Left colon (tissue), 2 donors: ENCODE measurements at regions of chr14 and their contacts with region 1.

Region 1: DNA sequence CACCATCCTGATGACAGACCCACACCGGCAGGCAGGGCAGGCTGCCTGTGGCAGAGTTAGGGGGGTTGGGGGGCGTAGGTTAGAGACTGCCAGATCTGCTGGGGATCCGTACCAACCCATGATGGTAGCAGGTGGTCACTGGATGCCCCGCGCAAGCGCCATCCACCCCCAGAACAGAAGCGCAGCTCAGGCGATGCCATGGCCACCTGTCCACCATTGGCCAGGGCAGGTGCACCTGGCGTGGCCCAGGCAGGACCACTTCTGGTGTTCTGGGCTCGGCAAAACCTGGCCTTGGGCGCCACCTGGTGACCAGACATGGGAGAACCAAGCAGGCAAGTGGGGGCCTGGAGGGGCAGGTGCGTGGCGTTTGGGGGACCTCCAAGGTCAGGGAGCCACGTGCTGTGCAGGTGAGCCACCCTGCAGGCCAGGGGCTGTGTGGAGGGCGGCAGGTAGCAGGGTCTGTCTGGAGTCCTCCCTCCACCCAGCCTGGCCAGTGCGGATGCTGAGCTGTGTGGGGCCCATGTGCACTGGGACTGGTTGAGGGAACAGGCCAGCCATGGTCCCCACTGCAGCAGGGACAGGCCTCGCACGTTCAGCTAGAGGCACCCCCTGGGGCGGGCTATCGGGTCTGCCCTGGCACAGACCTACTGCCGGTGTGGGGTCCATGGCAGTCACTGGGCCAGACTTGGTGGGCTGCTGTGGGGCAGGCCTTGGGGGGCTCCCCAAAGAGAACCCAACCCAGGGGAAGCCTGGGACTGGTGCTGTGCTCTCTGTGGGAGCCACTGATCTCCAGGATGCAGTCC is 15.6 kb downstream of the BAG5 start:
- DNase-seq: peak; percentile 66 to 79
- ATAC-seq: peak; percentile 47

Region 2: DNA sequence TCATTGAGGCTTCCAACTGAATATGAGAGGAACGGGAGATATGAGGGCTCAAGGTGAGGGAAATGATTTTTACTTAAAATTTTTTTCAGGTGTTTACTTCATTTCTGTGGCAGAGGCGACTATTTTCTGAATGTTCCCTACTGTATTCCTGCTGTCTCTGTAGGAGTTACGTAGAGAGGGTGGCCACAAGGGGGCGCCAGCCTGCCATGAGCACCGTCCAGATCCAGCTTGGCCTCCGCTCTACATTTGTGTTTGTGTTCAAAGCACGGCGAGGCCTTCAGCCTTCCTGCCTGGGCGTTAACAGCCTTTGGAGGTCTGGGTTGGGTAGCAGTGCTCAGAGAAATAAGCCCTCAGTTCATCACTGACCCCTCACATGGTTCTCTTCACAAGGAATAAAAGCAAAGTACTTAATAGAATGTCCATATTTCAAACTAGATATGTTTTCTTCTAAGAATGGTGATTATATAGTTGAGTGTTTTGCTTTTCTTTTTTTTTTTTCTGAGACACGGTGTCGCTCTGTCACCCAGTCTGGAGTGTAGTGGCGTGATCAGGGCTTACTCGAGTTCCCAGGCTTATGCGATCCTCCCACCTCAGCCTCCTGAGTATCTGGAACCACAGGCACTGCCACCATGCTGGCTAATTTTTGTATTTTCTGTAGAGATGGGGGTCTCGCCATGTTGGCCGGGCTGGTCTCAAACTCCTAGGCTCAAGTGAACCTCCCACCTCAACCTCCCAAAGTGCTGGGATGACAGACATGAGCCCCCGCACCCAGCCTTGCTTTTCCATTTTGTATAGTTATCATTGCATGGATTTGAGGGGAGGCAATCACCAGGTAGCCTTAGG is 46.5 kb before region 1 on chr14:
- intact Hi-C with region 1: loop called in 1 of 2 experiments (anchors 5 kb)
- DNase-seq: peak; percentile 82 to 97
- ATAC-seq: peak; percentile 96

Region 3: DNA sequence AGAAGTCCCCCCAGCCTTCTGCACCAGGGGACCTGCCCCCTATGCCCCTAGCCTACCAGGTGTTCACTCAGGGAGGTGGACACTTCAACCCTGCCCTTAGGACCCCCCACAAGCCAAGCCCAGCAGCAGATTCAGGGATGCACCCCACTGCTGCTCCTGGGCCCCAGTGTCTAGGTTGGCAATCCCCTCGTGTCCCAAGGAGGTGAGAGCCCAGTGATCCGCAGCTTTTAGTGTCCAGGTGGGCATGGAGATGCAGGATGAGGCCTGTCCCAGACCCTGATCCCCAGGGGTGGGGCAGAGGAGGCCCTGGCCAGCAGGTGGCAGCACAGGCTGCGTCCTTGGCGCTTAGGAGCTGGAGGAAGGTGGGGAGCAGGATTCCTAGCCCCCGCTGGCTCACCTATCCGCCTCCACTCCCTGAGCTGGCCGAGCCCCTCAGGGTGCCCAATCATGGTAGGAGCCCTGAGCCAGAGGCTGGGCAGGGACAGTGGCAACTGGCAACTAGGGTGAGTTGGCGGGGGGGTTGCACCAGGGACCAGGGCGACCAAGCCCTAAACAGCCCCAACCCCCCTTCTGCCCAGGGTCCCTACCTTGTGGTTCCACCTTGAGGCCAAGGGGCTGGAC is 28.3 kb before region 1 on chr14:
- intact Hi-C with region 1: loop called in 1 of 2 experiments (anchors 2 kb)
- DNase-seq: peak; percentile 70 to 84
- ATAC-seq: peak; percentile 31